PC-9 (cell line): ENCODE measurements at regions of chr16 and their contacts with region 1.

Region 1: GRCh38 chr16:24544640-24545039 is 5.3 kb downstream of the RBBP6 start:
- DNase-seq: no peak
- H3K4me3 ChIP-seq: no peak overlapping the region
- H3K27ac ChIP-seq: no peak overlapping the region
- H3K4me1 ChIP-seq: peaks cover 22% of the 10 kb centered on the region
- H3K27me3 ChIP-seq: no peaks in the 10 kb centered on the region
- CTCF ChIP-seq: no peak

Region 2: DNA sequence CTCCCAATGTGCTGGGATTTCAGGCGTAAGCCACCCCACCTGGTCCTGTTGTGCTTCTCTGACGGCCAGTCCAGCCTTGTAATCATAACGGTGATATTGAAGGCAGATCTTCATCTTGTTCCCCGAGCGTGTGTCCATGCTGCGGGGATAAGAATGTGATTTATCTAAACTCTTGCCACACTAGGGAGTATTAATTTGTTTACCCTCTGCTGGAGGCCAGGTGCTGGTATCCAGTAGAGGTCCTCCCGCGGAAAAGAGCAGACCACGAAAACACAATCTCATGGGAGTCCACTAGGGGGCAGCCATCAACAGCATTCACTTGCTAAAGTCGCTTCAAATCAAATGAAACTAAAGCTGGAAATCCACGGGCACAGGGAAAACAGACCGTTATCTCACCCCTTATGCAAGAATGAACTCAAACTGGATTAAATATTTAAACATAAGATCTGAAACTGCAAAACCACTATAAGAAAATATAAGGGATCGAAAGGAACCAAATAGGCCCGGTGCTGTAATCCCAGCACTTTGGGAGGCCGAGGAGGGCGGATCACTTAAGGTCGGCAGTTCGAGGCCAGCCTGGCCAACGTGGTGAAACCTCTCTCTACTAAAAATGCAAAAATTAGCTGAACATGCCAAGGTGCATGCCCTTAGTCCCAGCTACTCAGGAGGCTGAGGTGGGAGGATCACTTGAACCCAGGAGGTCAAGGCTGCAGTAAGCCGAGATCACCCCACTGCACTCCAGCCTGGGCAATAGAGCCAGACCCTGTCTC is 27.6 kb before region 1 on chr16:
- CTCF ChIA-PET with region 1: interaction called, 14 read pairs
- POLR2A ChIA-PET with region 1: no interaction called
- intact Hi-C with region 1: no loop called
- DNase-seq: peak; percentile 79 to 83
- H3K4me3 ChIP-seq: no peak overlapping the region
- H3K27ac ChIP-seq: no peak overlapping the region
- H3K4me1 ChIP-seq: peaks cover 18% of the 10 kb centered on the region
- H3K27me3 ChIP-seq: no peaks in the 10 kb centered on the region
- CTCF ChIP-seq: peak; percentile 94

Region 3: GRCh38 chr16:24645739-24646645 is 101.4 kb after region 1 on chr16:
- CTCF ChIA-PET with region 1: no interaction called
- POLR2A ChIA-PET with region 1: no interaction called
- intact Hi-C with region 1: no loop called
- DNase-seq: peak; percentile 81 to 99
- H3K4me3 ChIP-seq: no peak overlapping the region
- H3K27ac ChIP-seq: peak overlapping the region; percentile 93
- H3K4me1 ChIP-seq: peaks cover 36% of the 10 kb centered on the region
- H3K27me3 ChIP-seq: no peaks in the 10 kb centered on the region
- CTCF ChIP-seq: no peak

Region 4: GRCh38 chr16:25051406-25052150 is 506.9 kb after region 1 on chr16:
- CTCF ChIA-PET with region 1: no interaction called
- POLR2A ChIA-PET with region 1: no interaction called
- intact Hi-C with region 1: no loop called
- DNase-seq: peak; percentile 23 to 69
- H3K4me3 ChIP-seq: no peak overlapping the region
- H3K27ac ChIP-seq: no peak overlapping the region
- H3K4me1 ChIP-seq: peaks cover 38% of the 10 kb centered on the region
- H3K27me3 ChIP-seq: no peaks in the 10 kb centered on the region
- CTCF ChIP-seq: no peak